CD8-positive, alpha-beta T cell (primary cell): ENCODE measurements at regions of chr3 and their contacts with region 1.

Region 1: GRCh38 chr3:51391075-51391567 is at the start of gene RBM15B:
- DNase-seq: peak; percentile 94 to 98 (median 97)
- ATAC-seq: peak; percentile 89
- H3K4me3 ChIP-seq: peak within 1 kb of the TSS; percentile 55 to 61
- H3K4me3 Mint-ChIP-seq: peak within 1 kb of the TSS; percentile 82
- H3K27ac ChIP-seq: peak within 1 kb of the TSS; percentile 71 to 88
- H3K27ac Mint-ChIP-seq: peak within 1 kb of the TSS; percentile 94
- H3K4me1 ChIP-seq: peaks cover 50% of the 10 kb centered on the region
- H3K4me1 Mint-ChIP-seq: peaks cover 68% of the 10 kb centered on the region
- H3K27me3 ChIP-seq: no peaks in the 10 kb centered on the region
- H3K27me3 Mint-ChIP-seq: no peaks in the 10 kb centered on the region
- CTCF ChIP-seq: peak; percentile 70
- total RNA-seq, gene RBM15B: 29.5 to 29.8 TPM

Region 2: GRCh38 chr3:51378065-51378464 is 13.1 kb before region 1 on chr3:
- CTCF ChIA-PET with region 1: interaction called, 13 read pairs
- POLR2A ChIA-PET with region 1: no interaction called
- intact Hi-C with region 1: no loop called
- DNase-seq: no peak
- ATAC-seq: no peak
- H3K4me3 ChIP-seq: no peak overlapping the region
- H3K4me3 Mint-ChIP-seq: no peak overlapping the region
- H3K27ac ChIP-seq: no peak overlapping the region
- H3K27ac Mint-ChIP-seq: no peak overlapping the region
- H3K4me1 ChIP-seq: peaks cover 12% of the 10 kb centered on the region
- H3K4me1 Mint-ChIP-seq: peaks cover 10% of the 10 kb centered on the region
- H3K27me3 ChIP-seq: no peaks in the 10 kb centered on the region
- H3K27me3 Mint-ChIP-seq: no peaks in the 10 kb centered on the region
- CTCF ChIP-seq: no peak

Region 3: DNA sequence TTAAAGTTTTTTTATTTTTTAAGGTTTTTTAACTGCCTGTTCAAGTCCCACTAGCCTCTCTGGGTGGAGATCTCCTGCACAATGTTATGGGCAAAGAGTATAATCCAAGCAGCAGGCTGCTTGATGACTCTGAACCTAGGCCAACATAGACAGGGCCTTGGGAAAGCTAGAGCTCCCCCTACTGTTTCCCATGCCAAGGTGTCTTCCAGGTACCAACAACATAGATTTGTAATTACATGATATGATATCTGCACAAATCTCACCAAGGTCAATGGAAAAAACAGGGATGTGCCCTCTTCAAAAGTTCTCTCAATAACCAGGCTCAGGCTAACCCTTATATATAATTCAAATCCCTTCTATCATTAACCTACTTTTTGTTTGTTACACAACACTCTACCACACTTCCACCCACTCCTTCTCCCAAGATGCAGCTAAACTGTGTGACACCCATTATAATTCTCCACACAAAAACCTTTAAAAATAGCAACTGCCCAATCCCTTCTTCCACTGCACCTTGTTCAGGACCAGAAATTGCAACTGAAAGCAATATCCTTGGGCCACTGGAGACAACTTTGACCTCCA is 43.7 kb after region 1 on chr3:
- CTCF ChIA-PET with region 1: interaction called, 9 read pairs
- POLR2A ChIA-PET with region 1: no interaction called
- intact Hi-C with region 1: loop called (anchors 1 to 2 kb)
- DNase-seq: peak; percentile 1 to 74 (median 45)
- ATAC-seq: peak; percentile 88
- H3K4me3 ChIP-seq: no peak overlapping the region
- H3K4me3 Mint-ChIP-seq: no peak overlapping the region
- H3K27ac ChIP-seq: no peak overlapping the region
- H3K27ac Mint-ChIP-seq: no peak overlapping the region
- H3K4me1 ChIP-seq: no peaks in the 10 kb centered on the region
- H3K4me1 Mint-ChIP-seq: peaks cover 7% of the 10 kb centered on the region
- H3K27me3 ChIP-seq: no peaks in the 10 kb centered on the region
- H3K27me3 Mint-ChIP-seq: no peaks in the 10 kb centered on the region
- CTCF ChIP-seq: peak; percentile 64

Region 4: DNA sequence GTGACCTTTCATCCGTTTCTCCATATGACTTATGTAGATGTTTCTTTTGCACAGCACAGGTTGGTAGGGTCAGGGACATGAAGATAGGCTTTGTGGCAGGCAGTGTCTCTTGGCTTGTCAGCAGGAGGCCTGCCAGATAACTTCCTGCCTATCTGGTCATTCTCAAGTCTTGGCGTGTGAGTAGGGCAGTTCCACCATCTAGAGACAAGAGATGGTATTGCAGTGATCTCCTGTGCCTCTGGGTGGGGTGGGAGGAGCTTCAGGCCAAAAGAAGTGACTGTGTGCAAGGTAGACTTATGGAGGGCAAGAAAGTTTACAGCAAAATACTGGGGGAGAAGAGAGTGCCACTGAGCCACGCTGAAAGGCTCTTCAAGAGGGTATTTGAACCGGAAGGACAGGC is 291.0 kb after region 1 on chr3:
- CTCF ChIA-PET with region 1: interaction called, 9 read pairs
- POLR2A ChIA-PET with region 1: interaction called, 5 read pairs
- intact Hi-C with region 1: loop called (anchors 1 kb)
- DNase-seq: peak; percentile 59 to 93 (median 71)
- ATAC-seq: peak; percentile 86
- H3K4me3 ChIP-seq: peak overlapping the region; percentile 24 to 27
- H3K4me3 Mint-ChIP-seq: peak overlapping the region; percentile 72
- H3K27ac ChIP-seq: peak overlapping the region; percentile 17 to 64
- H3K27ac Mint-ChIP-seq: peak overlapping the region; percentile 52
- H3K4me1 ChIP-seq: peaks cover 96% of the 10 kb centered on the region
- H3K4me1 Mint-ChIP-seq: peaks cover 91% of the 10 kb centered on the region
- H3K27me3 ChIP-seq: no peaks in the 10 kb centered on the region
- H3K27me3 Mint-ChIP-seq: no peaks in the 10 kb centered on the region
- CTCF ChIP-seq: peak; percentile 85

Region 5: GRCh38 chr3:51974963-51975851 is 584.1 kb after region 1 on chr3 and contains the start of gene ABHD14A:
- CTCF ChIA-PET with region 1: no interaction called
- POLR2A ChIA-PET with region 1: no interaction called
- intact Hi-C with region 1: loop called in 1 of 2 experiments (anchors 5 kb)
- DNase-seq: peak; percentile 35 to 89 (median 69)
- ATAC-seq: peak; percentile 66
- H3K4me3 ChIP-seq: peak within 1 kb of the TSS; percentile 86 to 92
- H3K4me3 Mint-ChIP-seq: peak within 1 kb of the TSS; percentile 88
- H3K27ac ChIP-seq: peak within 1 kb of the TSS; percentile 50 to 72
- H3K27ac Mint-ChIP-seq: peak within 1 kb of the TSS; percentile 87
- H3K4me1 ChIP-seq: peaks cover 33% of the 10 kb centered on the region
- H3K4me1 Mint-ChIP-seq: peaks cover 31% of the 10 kb centered on the region
- H3K27me3 ChIP-seq: no peaks in the 10 kb centered on the region
- H3K27me3 Mint-ChIP-seq: no peaks in the 10 kb centered on the region
- CTCF ChIP-seq: no peak
- total RNA-seq, gene ABHD14A: 6.8 to 6.9 TPM